ENCODE measurements at regions of chr15 and their contacts with region 1.

Region 1: DNA sequence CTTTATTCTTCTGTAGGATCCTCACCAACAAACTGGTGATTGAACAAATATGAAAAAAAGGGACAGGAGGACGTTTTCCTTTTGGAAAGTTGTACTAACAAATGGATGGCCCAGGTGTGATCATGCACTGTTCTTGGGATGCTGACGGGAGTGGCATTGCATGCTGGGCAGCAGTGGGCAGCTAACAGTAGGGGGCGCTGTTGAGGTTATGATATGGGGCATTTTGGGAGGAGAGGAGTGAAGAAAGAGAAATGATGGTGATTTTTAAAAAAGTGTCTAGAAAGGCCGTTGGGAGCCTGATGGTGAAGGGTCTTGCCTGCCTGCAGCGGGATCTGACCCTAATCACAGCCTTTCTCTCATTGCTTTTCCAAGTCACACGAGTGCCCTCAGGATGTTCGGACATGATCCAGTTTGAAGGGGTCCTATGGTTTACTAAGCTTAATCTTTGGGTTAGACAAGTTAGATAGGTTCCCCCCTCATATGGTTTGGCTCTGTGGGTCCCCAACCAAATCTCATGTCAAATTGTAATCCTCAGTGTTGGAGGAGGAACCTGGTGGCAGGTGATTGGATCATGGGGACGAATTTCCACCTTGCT is 46.2 kb upstream of the PRTG start:
- DNase-seq: peak in 1 of 2 experiments; percentile 88
- H3K4me3 ChIP-seq: no peak overlapping the region
- H3K27ac ChIP-seq: no peak overlapping the region
- H3K4me1 ChIP-seq: peaks cover 0 to 6% (median 2%) of the 10 kb centered on the region in 4 experiments; a peak in 3 of 7 replicates
- H3K27me3 ChIP-seq: no peaks in the 10 kb centered on the region
- CTCF ChIP-seq: peak; percentile 69 to 85 (median 82)
- EP300 ChIP-seq: no peak
- POLR2A ChIP-seq: no peak
- RAD21 ChIP-seq: peak; percentile 47 to 59

Region 2: DNA sequence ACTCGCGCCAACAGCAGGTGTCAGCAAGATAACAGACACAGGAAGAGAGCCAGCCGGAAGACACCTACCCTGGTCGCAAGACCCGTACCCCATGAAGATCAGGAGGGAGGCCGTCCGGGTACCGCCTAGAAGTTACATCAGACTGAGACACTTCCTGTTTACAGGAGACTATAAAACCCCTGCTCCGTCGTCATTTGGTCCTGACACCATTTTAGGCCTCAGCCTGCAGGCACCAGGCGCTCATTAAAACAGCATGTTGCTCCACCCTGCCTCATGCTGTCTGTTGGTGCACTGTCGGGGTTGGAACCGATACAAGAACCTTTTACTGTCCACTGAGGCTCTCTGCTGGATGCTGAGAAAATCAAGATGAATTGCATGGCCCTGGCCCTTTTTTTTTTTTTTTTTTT is 30.6 kb before region 1 on chr15:
- CTCF ChIA-PET with region 1: interaction called, 11 read pairs
- POLR2A ChIA-PET with region 1: no interaction called
- DNase-seq: no peak
- H3K4me3 ChIP-seq: no peak overlapping the region
- H3K27ac ChIP-seq: no peak overlapping the region
- H3K4me1 ChIP-seq: no peaks in the 10 kb centered on the region
- H3K27me3 ChIP-seq: no peaks in the 10 kb centered on the region
- CTCF ChIP-seq: no peak
- EP300 ChIP-seq: no peak
- POLR2A ChIP-seq: no peak
- RAD21 ChIP-seq: no peak

Region 3: DNA sequence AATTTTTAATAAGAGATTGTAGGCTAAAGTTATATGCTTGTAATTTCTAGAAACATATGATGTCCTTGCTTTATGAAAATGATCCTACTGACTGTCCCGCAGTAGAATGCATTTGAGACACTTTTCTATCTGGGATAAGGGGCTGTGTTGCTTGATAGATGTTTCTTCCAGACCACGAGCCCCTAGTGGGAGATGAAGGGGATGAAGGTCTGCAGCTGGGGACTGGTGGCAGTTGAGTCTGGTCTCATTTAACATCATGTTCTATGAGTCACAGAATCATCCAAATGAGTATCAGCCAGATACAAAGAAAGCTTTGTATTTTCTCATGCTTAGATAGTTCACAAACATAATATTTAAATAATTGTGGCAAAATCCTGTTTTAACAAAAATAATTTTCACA is 38.0 kb after region 1 on chr15:
- CTCF ChIA-PET with region 1: interaction called, 11 read pairs
- POLR2A ChIA-PET with region 1: no interaction called
- DNase-seq: no peak
- H3K4me3 ChIP-seq: no peak overlapping the region
- H3K27ac ChIP-seq: no peak overlapping the region
- H3K4me1 ChIP-seq: no peaks in the 10 kb centered on the region
- H3K27me3 ChIP-seq: no peaks in the 10 kb centered on the region
- CTCF ChIP-seq: peak in 1 of 3 experiments; percentile 23; a peak in 1 of 4 replicates
- EP300 ChIP-seq: no peak
- POLR2A ChIP-seq: no peak
- RAD21 ChIP-seq: no peak; a peak in 1 of 4 replicates

Measured in H1 (cell line).